CD4-positive, alpha-beta memory T cell (primary cell): ENCODE measurements at regions of chr19 and their contacts with region 1.

Region 1: DNA sequence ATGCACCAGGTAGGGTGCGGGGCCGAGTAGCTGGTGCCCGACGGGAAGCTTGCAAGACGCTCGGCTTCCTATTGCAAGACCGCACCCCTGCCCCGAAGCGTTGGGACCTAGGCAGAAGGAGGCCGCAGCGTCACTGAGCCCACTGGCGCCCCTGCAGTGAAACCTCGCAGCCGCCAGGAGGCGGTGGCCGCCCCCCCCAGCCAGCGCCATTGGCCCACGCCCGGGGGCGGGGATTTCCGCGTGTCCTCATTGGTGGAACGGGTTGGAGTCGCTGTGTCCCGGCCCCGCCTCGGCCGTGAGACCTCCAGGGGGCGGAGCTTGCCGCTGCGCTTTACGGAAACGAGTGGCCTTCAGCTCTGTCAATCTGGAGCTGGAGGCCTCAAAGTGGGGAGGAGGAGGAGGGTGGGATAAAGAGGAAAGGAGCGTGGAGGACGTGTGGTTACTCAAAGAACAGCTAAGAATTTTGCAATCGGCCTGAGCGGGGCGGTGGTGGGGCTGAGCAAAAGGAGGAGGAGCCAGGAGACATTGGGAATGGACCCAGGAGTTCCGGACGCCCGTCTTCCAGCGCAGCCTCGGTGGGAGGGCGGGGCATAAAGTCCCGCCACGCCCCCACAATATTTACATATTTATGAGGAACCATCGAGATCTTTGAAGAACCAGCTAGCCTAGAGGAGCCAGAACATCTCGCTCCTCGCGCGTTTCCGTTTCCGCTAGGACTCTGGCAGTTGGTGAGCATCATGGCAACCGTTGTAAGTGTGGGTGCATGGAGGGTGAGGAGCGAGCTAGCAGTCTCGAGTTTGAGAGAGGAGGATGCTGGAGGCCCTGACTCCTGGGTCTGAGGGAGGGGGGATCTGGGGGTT is at the starts of genes GYS1 and RUVBL2:
- DNase-seq: peak; percentile 99 to 100 (median 99)
- H3K4me3 ChIP-seq: peak within 1 kb of the TSS; percentile 91 to 98
- H3K4me3 Mint-ChIP-seq: peak within 1 kb of the TSS; percentile 90 to 98 (median 96)
- H3K27ac ChIP-seq: peak within 1 kb of the TSS; percentile 82
- H3K27ac Mint-ChIP-seq: peak within 1 kb of the TSS; percentile 84 to 99 (median 98)
- H3K4me1 ChIP-seq: peaks cover 30% of the 10 kb centered on the region
- H3K4me1 Mint-ChIP-seq: peaks cover 23 to 56% (median 31%) of the 10 kb centered on the region in 4 donors
- H3K27me3 ChIP-seq: no peaks in the 10 kb centered on the region
- H3K27me3 Mint-ChIP-seq: no peaks in the 10 kb centered on the region
- total RNA-seq, gene GYS1: 56.2 to 56.4 TPM
- total RNA-seq, gene RUVBL2: 27.9 to 28.5 TPM

Region 2: DNA sequence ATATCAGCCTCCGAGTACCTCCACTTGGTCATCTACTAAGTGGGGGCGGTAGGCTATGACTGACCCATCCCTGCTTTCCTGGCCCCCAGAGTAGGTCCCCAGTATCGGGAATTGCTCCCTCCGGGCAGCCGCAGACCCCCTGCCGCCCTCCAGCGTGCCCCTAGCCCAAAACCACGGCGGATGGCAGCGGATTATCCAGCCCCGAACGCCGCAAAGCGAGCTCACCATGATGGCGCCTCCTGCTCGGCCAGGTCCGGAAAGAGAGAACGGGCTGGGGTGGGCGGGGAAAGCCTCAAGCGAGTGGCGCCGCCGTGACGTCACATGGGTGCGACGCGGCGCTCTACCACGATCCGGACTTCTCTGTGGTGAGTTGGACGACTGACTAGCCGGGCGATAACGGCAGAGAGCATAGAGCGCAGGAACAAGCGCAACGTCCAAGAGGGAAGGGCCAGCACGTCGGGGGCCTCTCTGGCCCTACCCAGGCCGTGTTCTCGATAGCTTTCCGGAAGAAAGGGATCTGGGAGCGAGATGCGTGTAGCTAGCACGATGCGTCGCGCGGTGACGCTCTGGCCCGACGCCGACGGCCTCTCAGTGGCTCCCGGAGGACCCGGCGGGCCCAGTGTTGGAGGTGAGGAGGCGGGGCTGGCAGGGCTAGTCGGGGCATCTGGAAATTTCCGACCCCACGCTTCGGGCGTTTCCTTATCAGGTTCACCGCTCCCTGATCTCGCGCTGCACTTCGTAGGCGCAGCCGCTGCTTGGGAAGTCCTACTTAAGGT is 374.3 kb before region 1 on chr19 and contains the starts of genes RPL18 and SPHK2:
- CTCF ChIA-PET with region 1: interaction called, 3 read pairs
- POLR2A ChIA-PET with region 1: interaction called, 5 read pairs
- intact Hi-C with region 1: loop called (anchors 1 kb)
- DNase-seq: peak; percentile 94 to 97 (median 96)
- H3K4me3 ChIP-seq: peak within 1 kb of the TSS; percentile 76 to 81
- H3K4me3 Mint-ChIP-seq: peak within 1 kb of the TSS; percentile 95 to 98 (median 96)
- H3K27ac ChIP-seq: peak within 1 kb of the TSS; percentile 88
- H3K27ac Mint-ChIP-seq: peak within 1 kb of the TSS; percentile 97 to 99 (median 98)
- H3K4me1 ChIP-seq: peaks cover 50% of the 10 kb centered on the region
- H3K4me1 Mint-ChIP-seq: peaks cover 27 to 74% (median 49%) of the 10 kb centered on the region in 4 donors
- H3K27me3 ChIP-seq: no peaks in the 10 kb centered on the region
- H3K27me3 Mint-ChIP-seq: no peaks in the 10 kb centered on the region
- total RNA-seq, gene RPL18: 2,357 to 2,448 TPM
- total RNA-seq, gene SPHK2: 25.0 to 29.1 TPM

Region 3: GRCh38 chr19:48872182-48872883 is 121.1 kb before region 1 on chr19 and contains the start of gene PPP1R15A:
- CTCF ChIA-PET with region 1: interaction called, 6 read pairs
- POLR2A ChIA-PET with region 1: interaction called, 42 read pairs
- intact Hi-C with region 1: loop called (anchors 1 kb)
- DNase-seq: peak; percentile 97 to 99 (median 98)
- H3K4me3 ChIP-seq: peak within 1 kb of the TSS; percentile 52 to 99
- H3K4me3 Mint-ChIP-seq: peak within 1 kb of the TSS; percentile 95 to 100 (median 99)
- H3K27ac ChIP-seq: peak within 1 kb of the TSS; percentile 100
- H3K27ac Mint-ChIP-seq: peak within 1 kb of the TSS; percentile 99 to 100 (median 100)
- H3K4me1 ChIP-seq: peaks cover 34% of the 10 kb centered on the region
- H3K4me1 Mint-ChIP-seq: peaks cover 27 to 48% (median 34%) of the 10 kb centered on the region in 4 donors
- H3K27me3 ChIP-seq: no peaks in the 10 kb centered on the region
- H3K27me3 Mint-ChIP-seq: peaks cover 0 to 6% of the 10 kb centered on the region in 2 donors
- total RNA-seq, gene PPP1R15A: 67.0 to 69.8 TPM

Region 4: DNA sequence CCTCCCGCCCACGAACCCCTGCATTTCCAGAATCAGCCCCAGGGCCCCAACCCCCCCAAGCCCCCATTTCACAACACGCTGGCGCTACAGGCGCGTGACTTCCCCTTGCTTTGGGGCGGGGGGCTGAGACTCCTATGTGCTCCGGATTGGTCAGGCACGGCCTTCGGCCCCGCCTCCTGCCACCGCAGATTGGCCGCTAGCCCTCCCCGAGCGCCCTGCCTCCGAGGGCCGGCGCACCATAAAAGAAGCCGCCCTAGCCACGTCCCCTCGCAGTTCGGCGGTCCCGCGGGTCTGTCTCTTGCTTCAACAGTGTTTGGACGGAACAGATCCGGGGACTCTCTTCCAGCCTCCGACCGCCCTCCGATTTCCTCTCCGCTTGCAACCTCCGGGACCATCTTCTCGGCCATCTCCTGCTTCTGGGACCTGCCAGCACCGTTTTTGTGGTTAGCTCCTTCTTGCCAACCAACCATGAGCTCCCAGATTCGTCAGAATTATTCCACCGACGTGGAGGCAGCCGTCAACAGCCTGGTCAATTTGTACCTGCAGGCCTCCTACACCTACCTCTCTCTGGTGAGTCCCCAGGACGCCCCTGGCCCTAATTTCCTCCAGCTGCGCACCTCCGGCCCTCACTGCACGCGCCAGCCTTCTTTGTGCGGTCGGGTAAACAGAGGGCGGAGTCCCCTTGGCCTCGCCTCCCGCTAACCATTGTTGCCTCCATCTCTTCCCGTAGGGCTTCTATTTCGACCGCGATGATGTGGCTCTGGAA is 28.2 kb before region 1 on chr19 and contains the start of gene FTL:
- CTCF ChIA-PET with region 1: interaction called, 20 read pairs
- POLR2A ChIA-PET with region 1: interaction called, 68 read pairs
- intact Hi-C with region 1: no loop called
- DNase-seq: peak; percentile 81 to 87 (median 85)
- H3K4me3 ChIP-seq: peak within 1 kb of the TSS; percentile 84 to 91
- H3K4me3 Mint-ChIP-seq: peak within 1 kb of the TSS; percentile 93 to 100 (median 96)
- H3K27ac ChIP-seq: peak within 1 kb of the TSS; percentile 64
- H3K27ac Mint-ChIP-seq: peak within 1 kb of the TSS; percentile 96 to 100 (median 97)
- H3K4me1 ChIP-seq: peaks cover 43% of the 10 kb centered on the region
- H3K4me1 Mint-ChIP-seq: peaks cover 30 to 67% (median 46%) of the 10 kb centered on the region in 4 donors
- H3K27me3 ChIP-seq: no peaks in the 10 kb centered on the region
- H3K27me3 Mint-ChIP-seq: no peaks in the 10 kb centered on the region
- total RNA-seq, gene FTL: 1,304 to 1,371 TPM

Region 5: GRCh38 chr19:48982280-48982679 is 11.1 kb before region 1 on chr19:
- CTCF ChIA-PET with region 1: interaction called, 19 read pairs
- POLR2A ChIA-PET with region 1: interaction called, 7 read pairs
- intact Hi-C with region 1: no loop called
- DNase-seq: no peak
- H3K4me3 ChIP-seq: no peak overlapping the region
- H3K4me3 Mint-ChIP-seq: no peak overlapping the region
- H3K27ac ChIP-seq: no peak overlapping the region
- H3K27ac Mint-ChIP-seq: peak overlapping the region in 1 of 7 donors; percentile 35
- H3K4me1 ChIP-seq: no peaks in the 10 kb centered on the region
- H3K4me1 Mint-ChIP-seq: no peaks in the 10 kb centered on the region
- H3K27me3 ChIP-seq: no peaks in the 10 kb centered on the region
- H3K27me3 Mint-ChIP-seq: no peaks in the 10 kb centered on the region

Region 6: DNA sequence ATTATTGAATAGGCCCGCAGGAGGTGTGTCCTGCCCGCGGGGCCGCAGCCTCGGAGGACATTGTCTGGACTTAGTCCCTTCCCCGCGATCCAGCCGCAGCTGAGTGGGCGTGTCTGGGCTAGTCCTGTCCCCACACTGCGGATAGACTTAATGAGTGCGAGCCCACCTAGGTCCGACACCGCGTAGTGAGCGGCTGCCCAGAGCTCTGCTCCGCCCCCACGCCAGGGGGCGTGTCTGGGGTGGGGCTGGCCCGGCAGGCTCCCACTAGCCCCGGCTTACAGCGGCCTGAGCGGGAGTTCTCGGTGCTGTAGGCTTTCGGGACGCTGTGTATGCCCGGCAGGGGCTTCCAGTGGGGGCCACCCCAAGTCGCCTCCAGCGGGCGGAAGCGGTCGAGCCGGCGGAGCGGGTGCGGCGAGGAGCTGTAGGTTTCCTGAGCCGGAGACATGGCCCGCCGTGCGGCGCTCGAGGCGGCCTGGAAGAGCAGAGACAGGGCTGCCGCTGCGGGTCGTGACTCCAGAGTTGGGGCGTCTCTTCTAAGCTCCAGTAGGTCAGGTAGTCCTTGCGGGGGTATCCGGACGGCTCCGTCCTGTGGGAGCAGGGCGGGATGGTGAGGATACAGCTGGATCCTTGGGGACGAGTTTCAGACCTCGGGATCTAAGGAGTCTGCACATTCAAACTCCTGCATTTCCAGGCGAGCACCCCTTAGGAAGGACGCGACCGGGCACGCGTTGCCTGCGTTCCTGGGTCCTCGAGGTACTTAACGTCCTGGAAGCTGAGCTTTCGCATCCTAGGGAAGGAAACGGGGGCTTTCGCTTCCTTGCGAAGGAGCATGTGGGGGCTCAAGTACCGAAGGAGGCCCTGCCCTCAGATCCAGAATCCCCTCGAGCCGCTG is 62.9 kb after region 1 on chr19:
- CTCF ChIA-PET with region 1: interaction called, 7 read pairs
- POLR2A ChIA-PET with region 1: interaction called, 8 read pairs
- intact Hi-C with region 1: loop called (anchors 10 kb)
- DNase-seq: peak; percentile 42 to 52 (median 48)
- H3K4me3 ChIP-seq: peak overlapping the region; percentile 49 to 57
- H3K4me3 Mint-ChIP-seq: peak overlapping the region; percentile 79 to 93 (median 89)
- H3K27ac ChIP-seq: no peak overlapping the region
- H3K27ac Mint-ChIP-seq: peak overlapping the region in 2 of 7 donors; percentile 2 to 17
- H3K4me1 ChIP-seq: peaks cover 23% of the 10 kb centered on the region
- H3K4me1 Mint-ChIP-seq: peaks cover 7 to 27% (median 14%) of the 10 kb centered on the region in 4 donors
- H3K27me3 ChIP-seq: peaks cover 18% of the 10 kb centered on the region
- H3K27me3 Mint-ChIP-seq: peaks cover 16 to 24% of the 10 kb centered on the region in 2 donors

Region 7: DNA sequence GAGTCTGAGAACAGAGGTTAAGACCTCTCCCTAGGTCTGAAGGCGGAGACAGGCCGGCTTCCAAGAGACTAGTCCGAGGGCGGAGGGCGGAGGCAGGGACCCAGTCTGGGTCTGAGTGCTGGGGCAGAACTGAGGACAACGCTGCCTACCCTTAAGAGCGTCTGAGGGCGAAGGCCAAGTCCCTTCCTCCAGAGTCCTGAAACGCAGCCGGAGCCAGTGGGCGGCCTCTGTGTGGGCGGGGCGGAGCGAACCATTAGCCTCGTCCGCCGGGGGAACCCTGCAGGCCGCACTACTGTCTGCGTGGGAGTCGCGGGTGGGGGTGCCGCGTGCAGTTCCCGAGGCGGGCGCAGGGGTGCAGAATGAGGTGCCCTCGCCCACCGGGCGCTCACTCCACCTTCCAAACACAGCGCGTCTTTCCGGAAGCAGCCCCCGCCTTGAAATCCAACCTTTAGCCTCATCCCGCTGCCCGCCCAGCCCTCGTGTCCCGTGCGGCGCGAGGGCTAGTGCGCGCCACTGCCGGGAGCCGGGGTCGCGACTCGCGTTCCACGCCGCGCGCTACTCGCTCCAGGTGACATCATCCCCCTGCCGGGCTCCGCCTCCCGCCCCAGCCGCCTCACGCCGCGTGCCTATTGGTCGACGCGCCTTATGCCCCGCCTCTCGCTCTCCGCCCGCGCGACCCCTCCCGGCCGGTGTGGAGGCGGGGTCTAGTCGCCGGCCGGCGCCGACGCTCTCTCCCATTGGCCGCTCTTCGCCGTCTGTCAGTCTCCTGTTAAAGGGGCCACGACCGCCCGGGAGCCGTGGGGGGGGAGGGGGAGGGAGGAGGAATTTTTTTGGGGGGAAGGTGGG is 125.4 kb after region 1 on chr19 and contains the start of gene C19orf73:
- CTCF ChIA-PET with region 1: interaction called, 8 read pairs
- POLR2A ChIA-PET with region 1: interaction called, 14 read pairs
- intact Hi-C with region 1: loop called (anchors 2 kb)
- DNase-seq: peak; percentile 94 to 98 (median 97)
- H3K4me3 ChIP-seq: peak within 1 kb of the TSS; percentile 73 to 78
- H3K4me3 Mint-ChIP-seq: peak within 1 kb of the TSS; percentile 83 to 93 (median 88)
- H3K27ac ChIP-seq: peak within 1 kb of the TSS; percentile 79
- H3K27ac Mint-ChIP-seq: peak within 1 kb of the TSS; percentile 90 to 96 (median 94)
- H3K4me1 ChIP-seq: peaks cover 31% of the 10 kb centered on the region
- H3K4me1 Mint-ChIP-seq: peaks cover 22 to 42% (median 36%) of the 10 kb centered on the region in 4 donors
- H3K27me3 ChIP-seq: no peaks in the 10 kb centered on the region
- H3K27me3 Mint-ChIP-seq: no peaks in the 10 kb centered on the region
- total RNA-seq, gene C19orf73: 1.7 to 1.9 TPM